Ascending aorta (tissue), 2 donors: ENCODE measurements at regions of chr12 and their contacts with region 1.

Region 1: DNA sequence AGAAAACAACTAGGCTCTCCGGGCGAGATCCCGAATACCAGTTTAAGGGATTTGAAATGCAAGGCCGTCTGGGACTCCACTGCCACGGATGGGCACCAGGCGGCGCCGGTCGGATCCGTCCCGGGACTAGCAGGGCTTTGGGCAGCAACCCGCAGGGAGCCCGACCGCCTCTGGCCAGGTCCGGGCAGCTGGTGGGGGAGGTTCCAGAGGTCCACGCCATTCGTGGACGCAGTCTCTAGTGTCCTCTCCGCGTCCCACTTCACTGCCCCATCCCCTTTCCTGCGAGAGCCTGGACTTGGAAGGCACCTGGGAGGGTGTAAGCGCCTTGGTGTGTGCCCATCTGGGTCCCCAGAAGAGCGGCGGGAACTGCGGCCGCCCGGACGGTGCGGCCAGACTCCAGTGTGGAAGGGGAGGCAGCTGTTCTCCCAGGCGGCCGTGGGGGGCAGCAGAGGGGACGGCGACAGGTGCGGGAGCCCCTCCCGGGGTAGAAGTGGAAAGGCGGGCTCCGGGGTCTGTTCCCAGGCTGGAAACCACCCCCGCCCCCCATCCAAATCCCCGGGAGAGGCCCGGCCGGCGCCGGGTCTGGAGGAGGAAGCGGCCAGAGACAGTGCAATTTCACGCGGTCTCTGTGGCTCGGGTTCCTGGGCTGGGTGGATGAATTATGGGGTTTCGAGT is 838 bp upstream of the ERBB3 start:
- DNase-seq: peak; percentile 53 to 94
- H3K4me3 ChIP-seq: peak overlapping the region; percentile 72 to 86
- H3K27ac ChIP-seq: peak overlapping the region; percentile 75 to 81
- H3K4me1 ChIP-seq: peaks cover 5 to 7% of the 10 kb centered on the region in 2 donors
- H3K27me3 ChIP-seq: no peaks in the 10 kb centered on the region
- CTCF ChIP-seq: peak; percentile 65 to 82 (median 77)

Region 2: DNA sequence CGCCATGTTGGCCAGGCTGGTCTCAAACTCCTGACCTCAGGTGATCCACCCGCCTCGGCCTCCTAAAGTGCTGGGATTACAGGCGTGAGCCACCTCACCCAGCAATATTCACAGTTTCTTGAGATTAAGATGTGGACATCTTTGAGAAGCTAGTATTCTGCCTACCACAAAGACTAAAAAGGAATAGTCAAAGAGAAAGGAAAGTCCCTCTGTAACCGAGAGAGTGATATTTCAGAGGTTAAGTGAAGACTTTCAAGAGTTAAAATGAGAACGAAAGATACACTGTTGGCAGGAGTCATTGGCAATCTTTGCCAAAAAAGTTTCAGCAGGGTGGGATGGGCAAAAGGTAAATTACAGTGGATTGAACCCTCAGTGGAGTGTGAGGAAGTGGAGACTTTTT is 132.6 kb before region 1 on chr12:
- intact Hi-C with region 1: no loop called
- DNase-seq: no peak
- H3K4me3 ChIP-seq: no peak overlapping the region
- H3K27ac ChIP-seq: no peak overlapping the region
- H3K4me1 ChIP-seq: no peaks in the 10 kb centered on the region
- H3K27me3 ChIP-seq: no peaks in the 10 kb centered on the region
- CTCF ChIP-seq: no peak

Region 3: GRCh38 chr12:56007564-56008559 is 71.3 kb before region 1 on chr12:
- intact Hi-C with region 1: loop called (anchors 5 kb)
- DNase-seq: peak in 1 of 2 donors; percentile 70
- H3K4me3 ChIP-seq: peak overlapping the region; percentile 78 to 98
- H3K27ac ChIP-seq: peak overlapping the region; percentile 93 to 97
- H3K4me1 ChIP-seq: peaks cover 0 to 2% of the 10 kb centered on the region in 2 donors
- H3K27me3 ChIP-seq: no peaks in the 10 kb centered on the region
- CTCF ChIP-seq: no peak

Region 4: GRCh38 chr12:56104109-56104814 is 25.1 kb after region 1 on chr12 and contains the start of gene PA2G4:
- intact Hi-C with region 1: loop called (anchors 1 kb)
- DNase-seq: peak; percentile 92 to 99
- H3K4me3 ChIP-seq: peak within 1 kb of the TSS; percentile 69 to 88
- H3K27ac ChIP-seq: peak within 1 kb of the TSS; percentile 77 to 83
- H3K4me1 ChIP-seq: peaks cover 0 to 13% of the 10 kb centered on the region in 2 donors
- H3K27me3 ChIP-seq: no peaks in the 10 kb centered on the region
- CTCF ChIP-seq: no peak
- total RNA-seq, gene PA2G4: 101 TPM